AG04449 (cell line): ENCODE measurements at regions of chr15 and their contacts with region 1.

Region 1: GRCh38 chr15:92714477-92715401 is 59.2 kb upstream of the FAM174B start:
- DNase-seq: no peak
- H3K4me3 ChIP-seq: peak overlapping the region; percentile 63
- CTCF ChIP-seq: peak; percentile 77

Region 2: DNA sequence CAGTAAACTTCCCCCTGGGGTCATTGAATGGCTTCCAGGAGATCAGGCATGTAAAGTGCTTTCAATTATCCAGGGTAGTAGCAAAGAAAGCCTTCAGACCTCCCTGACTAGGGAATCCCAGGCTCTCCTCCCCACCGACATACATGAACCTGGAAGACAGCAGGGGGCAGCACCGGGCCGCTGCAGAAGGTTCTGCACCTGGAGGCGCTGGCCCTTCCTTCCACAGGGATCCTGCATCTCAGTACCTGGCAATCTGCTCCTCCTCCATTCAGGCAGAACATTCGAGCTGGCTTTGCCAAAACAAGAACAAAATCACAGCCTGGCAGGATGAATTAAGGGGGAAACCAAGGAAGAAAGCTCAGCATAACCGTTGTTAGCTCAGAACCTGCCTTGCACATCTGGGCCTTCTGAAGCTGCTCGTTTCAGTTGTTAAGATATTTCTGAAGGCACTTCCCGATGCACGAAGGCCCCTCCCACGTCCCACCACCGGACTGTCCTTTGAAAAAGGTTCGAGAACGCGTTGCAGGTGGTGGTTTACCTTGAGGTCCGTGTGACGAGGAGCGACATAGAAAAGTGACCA is 623.5 kb before region 1 on chr15:
- CTCF ChIA-PET with region 1: interaction called, 15 read pairs
- POLR2A ChIA-PET with region 1: no interaction called
- DNase-seq: no peak
- H3K4me3 ChIP-seq: no peak overlapping the region
- CTCF ChIP-seq: peak; percentile 78

Region 3: GRCh38 chr15:92097474-92098178 is 617.1 kb before region 1 on chr15:
- CTCF ChIA-PET with region 1: interaction called, 15 read pairs
- POLR2A ChIA-PET with region 1: no interaction called
- DNase-seq: no peak
- H3K4me3 ChIP-seq: no peak overlapping the region
- CTCF ChIP-seq: peak; percentile 73

Region 4: GRCh38 chr15:92277776-92278175 is 437.0 kb before region 1 on chr15:
- CTCF ChIA-PET with region 1: interaction called, 11 read pairs
- POLR2A ChIA-PET with region 1: no interaction called
- DNase-seq: no peak
- H3K4me3 ChIP-seq: no peak overlapping the region
- CTCF ChIP-seq: peak; percentile 42

Region 5: GRCh38 chr15:92391640-92392039 is 323.1 kb before region 1 on chr15:
- CTCF ChIA-PET with region 1: interaction called, 52 read pairs
- POLR2A ChIA-PET with region 1: interaction called, 3 read pairs
- DNase-seq: no peak
- H3K4me3 ChIP-seq: no peak overlapping the region
- CTCF ChIP-seq: peak; percentile 64

Region 6: GRCh38 chr15:92521624-92522008 is 193.1 kb before region 1 on chr15:
- CTCF ChIA-PET with region 1: interaction called, 95 read pairs
- POLR2A ChIA-PET with region 1: no interaction called
- DNase-seq: peak; percentile 28
- H3K4me3 ChIP-seq: no peak overlapping the region
- CTCF ChIP-seq: peak; percentile 64